ENCODE measurements at regions of chr7 and their contacts with region 1.

Region 1: DNA sequence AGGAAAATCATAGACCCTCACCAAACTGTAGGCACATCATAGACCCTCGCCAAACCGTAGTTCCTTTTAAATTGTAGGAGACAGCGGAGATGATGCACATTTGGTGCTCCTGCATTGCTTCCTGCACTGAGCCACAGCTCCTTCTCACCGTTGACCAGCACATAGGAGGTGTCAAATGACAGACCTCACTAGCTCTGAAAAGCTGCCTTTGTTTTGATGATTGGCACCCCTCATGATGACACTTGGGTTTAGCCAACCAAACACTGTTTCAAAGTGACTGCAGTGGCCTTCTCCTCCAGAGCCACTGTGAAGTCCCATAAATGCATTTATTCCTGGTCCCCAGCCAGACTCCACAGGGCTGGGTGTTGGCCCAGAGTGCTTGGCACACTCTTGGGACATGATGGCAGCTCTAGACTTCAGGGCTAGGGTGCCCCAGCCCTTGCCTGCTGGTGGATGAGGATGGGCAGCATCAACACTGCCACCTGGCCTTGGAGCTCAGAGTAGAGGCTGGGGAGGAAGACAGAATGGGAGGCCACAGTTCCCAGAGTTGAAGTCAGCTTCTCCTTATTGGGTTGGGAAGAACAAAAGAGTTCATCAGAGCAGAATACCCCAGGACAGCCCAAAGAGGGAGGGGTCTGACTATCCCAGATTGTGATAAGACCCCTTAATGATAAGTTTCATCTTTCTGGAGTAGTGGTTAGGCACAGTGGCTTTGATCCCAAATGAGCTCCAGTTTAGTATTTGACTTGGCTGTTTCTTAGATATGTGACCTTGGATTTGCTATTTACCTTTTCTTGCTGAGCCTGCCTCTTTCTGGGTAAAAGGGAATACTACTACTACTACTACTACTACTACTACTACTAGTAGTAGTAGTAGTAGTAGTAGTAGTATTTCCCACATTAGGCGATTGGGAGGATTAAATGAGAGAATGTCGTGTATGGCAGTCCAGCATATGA is 75.3 kb downstream of the MTPN start:
- DNase-seq: no peak
- H3K4me3 ChIP-seq: no peak overlapping the region
- H3K27ac ChIP-seq: no peak overlapping the region
- H3K4me1 ChIP-seq: no peaks in the 10 kb centered on the region
- H3K27me3 ChIP-seq: no peaks in the 10 kb centered on the region
- CTCF ChIP-seq: no peak
- EP300 ChIP-seq: no peak
- POLR2A ChIP-seq: no peak

Region 2: GRCh38 chr7:137203351-137203750 is 1301.5 kb after region 1 on chr7:
- intact Hi-C with region 1: loop called (anchors 5 kb)
- DNase-seq: no peak
- H3K4me3 ChIP-seq: no peak overlapping the region
- H3K27ac ChIP-seq: no peak overlapping the region
- H3K4me1 ChIP-seq: no peaks in the 10 kb centered on the region
- H3K27me3 ChIP-seq: no peaks in the 10 kb centered on the region
- CTCF ChIP-seq: no peak
- EP300 ChIP-seq: no peak
- POLR2A ChIP-seq: no peak